ENCODE measurements at regions of chr9 and their contacts with region 1.

Region 1: DNA sequence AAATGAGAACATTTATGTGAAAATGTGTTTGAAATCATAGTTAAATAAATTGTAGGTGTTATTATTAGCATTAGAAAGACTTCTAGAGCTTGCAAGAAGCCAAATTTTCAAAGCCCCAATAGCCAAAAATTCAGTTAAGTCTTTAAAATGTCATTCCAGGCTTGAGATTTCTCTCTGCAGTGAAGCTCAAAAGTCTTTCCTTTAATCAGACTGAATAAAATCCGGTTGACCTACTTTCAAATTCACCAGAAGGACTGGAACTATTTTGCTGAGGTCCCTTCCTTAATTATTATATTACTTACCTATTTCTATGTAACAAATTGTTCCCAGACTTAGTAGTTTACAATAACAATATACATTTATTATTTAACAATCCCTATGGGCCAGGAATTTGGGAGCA is 112.2 kb upstream of the TRPM3 start:
- H3K4me3 ChIP-seq: no peak overlapping the region
- H3K27ac ChIP-seq: no peak overlapping the region
- H3K4me1 ChIP-seq: no peaks in the 10 kb centered on the region
- CTCF ChIP-seq: no peak

Region 2: GRCh38 chr9:71090896-71091295 is 142.8 kb before region 1 on chr9:
- CTCF ChIA-PET with region 1: no interaction called
- POLR2A ChIA-PET with region 1: no interaction called
- H3K4me3 ChIP-seq: no peak overlapping the region
- H3K27ac ChIP-seq: no peak overlapping the region
- H3K4me1 ChIP-seq: no peaks in the 10 kb centered on the region
- CTCF ChIP-seq: no peak

Region 3: GRCh38 chr9:71210326-71210725 is 23.3 kb before region 1 on chr9:
- CTCF ChIA-PET with region 1: no interaction called
- POLR2A ChIA-PET with region 1: no interaction called
- H3K4me3 ChIP-seq: no peak overlapping the region
- H3K27ac ChIP-seq: no peak overlapping the region
- H3K4me1 ChIP-seq: no peaks in the 10 kb centered on the region
- CTCF ChIP-seq: no peak

Region 4: DNA sequence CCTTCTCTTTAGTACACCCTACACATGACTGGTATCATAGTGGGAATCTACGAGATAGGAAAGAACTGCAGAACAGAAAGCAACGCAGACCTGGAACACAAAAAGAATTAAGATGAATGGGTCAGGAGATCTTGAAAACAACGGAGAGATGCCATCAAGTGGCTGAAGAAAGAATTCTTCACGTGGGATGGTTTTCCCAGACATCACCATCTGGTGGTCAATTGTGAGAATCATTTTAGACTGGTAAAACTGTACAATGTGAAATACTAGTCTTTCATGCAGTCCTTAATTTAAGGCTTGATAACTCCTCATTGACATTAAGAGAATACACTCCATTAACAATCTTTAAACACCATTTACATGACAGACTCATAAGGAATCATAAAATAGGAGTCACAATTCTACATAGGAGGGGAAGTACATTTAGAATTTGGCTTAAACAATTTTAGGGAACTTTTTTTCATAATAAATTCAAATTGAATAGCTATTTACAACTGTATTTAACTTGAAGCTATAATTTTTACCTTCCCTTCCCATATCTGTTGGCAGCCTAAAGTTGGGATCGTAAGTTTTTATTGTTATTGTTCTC is 16.2 kb after region 1 on chr9:
- CTCF ChIA-PET with region 1: interaction called, 14 read pairs
- POLR2A ChIA-PET with region 1: no interaction called
- H3K4me3 ChIP-seq: no peak overlapping the region
- H3K27ac ChIP-seq: no peak overlapping the region
- H3K4me1 ChIP-seq: no peaks in the 10 kb centered on the region
- CTCF ChIP-seq: peak; percentile 71